ENCODE measurements at regions of chr4 and their contacts with region 1.

Region 1: DNA sequence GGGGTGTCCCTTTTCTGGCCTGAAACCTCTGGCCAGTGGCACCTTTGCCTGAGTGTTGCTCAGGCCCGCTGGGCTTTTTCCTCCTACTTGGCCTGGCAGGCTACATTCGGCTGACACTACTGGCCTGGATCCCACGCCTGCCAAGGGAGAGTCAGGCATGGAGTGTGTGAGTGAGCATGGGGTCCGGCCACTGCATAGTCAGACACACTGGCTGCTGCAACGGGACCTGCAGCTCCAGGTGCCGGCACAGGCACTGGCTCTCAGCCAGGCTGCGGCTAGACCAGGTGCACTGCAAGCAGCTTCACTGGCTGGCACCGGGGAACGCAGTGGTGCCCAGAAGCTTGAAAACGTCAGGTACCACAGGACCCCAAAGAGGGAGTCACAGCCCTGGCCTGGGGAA is 434.9 kb downstream of the ARHGAP24 start:
- DNase-seq: peak; percentile 32 to 61 (median 49)
- ATAC-seq: peak; percentile 73 to 93 (median 84)
- H3K4me3 ChIP-seq: no peak overlapping the region
- H3K27ac ChIP-seq: no peak overlapping the region
- H3K4me1 ChIP-seq: peaks cover 0 to 17% (median 0%) of the 10 kb centered on the region in 12 donors
- H3K27me3 ChIP-seq: no peaks in the 10 kb centered on the region
- CTCF ChIP-seq: no peak
- POLR2A ChIP-seq: no peak

Region 2: DNA sequence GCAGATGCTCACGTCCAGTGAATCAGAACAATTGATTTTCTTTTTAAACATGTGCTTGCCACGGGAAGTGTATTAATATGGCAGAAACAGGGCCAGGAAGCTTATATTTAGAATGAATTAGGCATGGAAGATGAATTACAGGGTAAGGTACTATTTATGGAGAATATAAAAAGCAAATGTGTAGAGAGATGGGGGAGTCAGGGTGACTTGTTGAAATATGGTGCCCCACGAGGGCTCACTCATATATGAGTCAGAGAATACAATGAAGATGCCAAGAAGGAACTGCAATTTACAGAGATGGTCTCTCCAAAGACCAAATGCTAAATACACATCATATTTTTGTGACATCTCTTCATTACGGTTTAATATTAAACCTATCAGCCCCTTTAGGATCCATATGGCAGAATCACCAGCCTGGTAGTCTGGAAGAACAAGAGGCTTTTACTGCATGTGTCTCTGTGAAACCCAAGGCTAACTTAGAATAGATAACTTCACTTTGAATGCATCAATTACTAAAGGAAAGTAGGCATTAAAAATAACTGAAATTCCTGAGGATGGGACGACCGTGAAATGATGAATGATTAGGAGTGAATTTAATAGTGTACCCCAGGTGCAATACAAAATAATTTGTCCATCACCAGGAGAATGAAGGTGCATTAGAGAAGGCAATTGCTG is 49.6 kb before region 1 on chr4:
- intact Hi-C with region 1: loop called in 1 of 10 experiments (anchors 10 kb)
- DNase-seq: no peak
- ATAC-seq: no peak
- H3K4me3 ChIP-seq: no peak overlapping the region
- H3K27ac ChIP-seq: no peak overlapping the region
- H3K4me1 ChIP-seq: peaks cover 0 to 24% (median 7%) of the 10 kb centered on the region in 12 donors
- H3K27me3 ChIP-seq: no peaks in the 10 kb centered on the region
- CTCF ChIP-seq: no peak
- POLR2A ChIP-seq: no peak

Measured in heart left ventricle (tissue), 16 donors.